ENCODE measurements at regions of chr19 and their contacts with region 1.

Region 1: DNA sequence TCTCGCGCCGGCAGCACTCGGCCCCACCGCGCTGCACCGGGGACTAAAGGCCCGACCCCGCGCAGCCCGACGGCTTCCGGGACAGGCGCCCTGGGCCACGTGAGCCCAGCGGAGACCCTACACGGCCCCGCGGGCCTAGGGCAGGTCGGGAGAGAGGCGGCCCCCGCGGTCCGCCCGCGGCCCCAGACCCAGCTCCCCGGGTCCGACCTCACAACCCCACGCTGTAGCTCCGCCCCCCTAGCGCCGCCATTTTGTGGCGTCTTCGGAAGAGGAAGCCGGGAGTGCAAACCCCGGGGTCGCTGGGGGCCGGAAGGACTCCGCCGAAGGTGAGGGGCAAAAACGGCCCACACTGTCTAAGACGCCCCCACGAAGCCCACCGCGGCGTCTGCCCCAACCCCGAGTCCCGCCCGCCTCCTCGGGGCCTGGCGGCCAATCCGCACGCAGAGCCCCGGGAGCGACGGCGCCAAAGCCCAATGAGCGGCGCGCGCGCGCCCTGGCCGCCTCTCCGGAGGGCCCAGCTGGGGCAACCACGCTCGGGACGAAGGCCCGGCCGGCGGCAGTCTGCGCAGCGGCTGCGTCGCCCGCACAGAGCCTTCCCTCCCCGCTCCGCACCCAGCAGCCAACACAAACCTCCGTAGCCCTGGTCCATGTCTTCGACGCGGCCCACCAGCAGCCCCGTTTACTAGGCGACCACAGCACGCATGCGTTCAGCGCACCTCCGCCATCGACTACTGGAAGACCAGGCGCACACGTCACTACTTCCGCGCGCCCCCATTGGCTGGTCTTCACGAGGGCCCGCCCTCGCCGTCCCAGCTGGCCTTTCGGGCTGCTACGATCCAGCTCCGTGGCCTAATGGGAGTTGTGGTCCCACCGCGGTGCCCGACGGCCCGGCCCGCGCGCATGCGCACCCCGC is at the start of gene AKAP8:
- DNase-seq: peak; percentile 97 to 98
- H3K4me3 ChIP-seq: peak within 1 kb of the TSS; percentile 78
- H3K27ac ChIP-seq: peak within 1 kb of the TSS; percentile 87
- H3K4me1 ChIP-seq: peaks cover 22% of the 10 kb centered on the region
- H3K27me3 ChIP-seq: no peaks in the 10 kb centered on the region
- CTCF ChIP-seq: no peak
- total RNA-seq, gene AKAP8: 39.5 and 43.4 TPM in 2 replicates

Region 2: DNA sequence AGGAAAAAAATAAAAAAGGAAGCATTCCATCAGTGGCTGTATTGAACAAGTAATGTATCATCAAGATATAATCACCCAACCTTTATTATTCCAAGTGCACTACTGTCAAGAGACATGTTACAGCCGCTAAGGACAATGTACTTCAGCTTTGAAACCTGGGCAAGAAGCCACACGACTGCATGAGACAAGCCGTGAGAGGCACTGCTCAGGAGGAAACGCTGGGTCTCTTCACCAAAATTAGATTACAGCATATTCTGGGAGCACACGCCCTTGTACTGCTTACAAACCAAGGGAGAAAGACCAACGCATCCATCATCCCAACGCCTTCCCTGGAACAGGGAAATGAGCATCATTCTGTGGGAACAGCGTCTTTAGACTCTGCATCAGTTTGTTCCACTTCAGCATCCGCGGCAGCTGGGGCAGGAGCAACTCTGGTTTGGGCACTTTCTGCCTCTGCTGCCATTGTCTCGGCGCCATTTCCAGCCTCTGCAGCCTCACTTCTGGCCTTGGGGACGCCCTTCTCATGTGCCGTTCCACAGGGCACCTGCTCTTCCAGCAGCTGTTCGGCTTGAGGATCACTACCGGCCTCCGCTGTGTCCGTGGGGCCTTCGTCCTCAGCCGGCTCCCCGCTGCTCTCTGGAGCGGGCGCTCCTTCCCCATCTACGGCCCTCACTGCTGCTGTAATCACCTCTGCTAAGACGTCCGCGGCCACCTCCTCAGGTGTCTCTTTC is 24.6 kb before region 1 on chr19:
- CTCF ChIA-PET with region 1: no interaction called
- POLR2A ChIA-PET with region 1: interaction called, 29 read pairs
- intact Hi-C with region 1: no loop called
- DNase-seq: no peak
- H3K4me3 ChIP-seq: no peak overlapping the region
- H3K27ac ChIP-seq: no peak overlapping the region
- H3K4me1 ChIP-seq: 0 out of 2 replicates have a peak, but pooled peaks cover 4% of the 10 kb centered on the region
- H3K27me3 ChIP-seq: no peaks in the 10 kb centered on the region
- CTCF ChIP-seq: no peak

Region 3: DNA sequence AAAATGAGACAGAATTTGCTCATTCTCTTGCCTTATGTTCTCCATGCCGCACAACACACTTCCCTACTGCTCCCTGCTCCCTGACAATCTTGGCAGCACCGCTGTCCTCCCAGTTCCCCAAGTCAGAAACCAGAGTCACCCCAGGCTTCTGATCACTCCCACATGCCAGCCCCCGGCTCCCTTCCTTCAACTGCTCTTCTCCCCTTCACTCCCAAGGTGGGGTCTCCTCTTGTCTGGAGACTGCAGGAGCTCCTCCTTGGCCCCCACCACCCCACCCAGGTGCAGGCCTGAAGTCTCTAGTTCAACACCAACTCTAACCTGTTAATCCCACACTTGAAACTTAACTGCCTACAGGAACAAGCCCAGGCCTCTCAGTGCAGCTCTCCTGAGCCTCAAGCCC is 17.1 kb after region 1 on chr19:
- CTCF ChIA-PET with region 1: no interaction called
- POLR2A ChIA-PET with region 1: no interaction called
- intact Hi-C with region 1: no loop called
- DNase-seq: no peak
- H3K4me3 ChIP-seq: no peak overlapping the region
- H3K27ac ChIP-seq: no peak overlapping the region
- H3K4me1 ChIP-seq: no peaks in the 10 kb centered on the region
- H3K27me3 ChIP-seq: no peaks in the 10 kb centered on the region
- CTCF ChIP-seq: no peak

Region 4: DNA sequence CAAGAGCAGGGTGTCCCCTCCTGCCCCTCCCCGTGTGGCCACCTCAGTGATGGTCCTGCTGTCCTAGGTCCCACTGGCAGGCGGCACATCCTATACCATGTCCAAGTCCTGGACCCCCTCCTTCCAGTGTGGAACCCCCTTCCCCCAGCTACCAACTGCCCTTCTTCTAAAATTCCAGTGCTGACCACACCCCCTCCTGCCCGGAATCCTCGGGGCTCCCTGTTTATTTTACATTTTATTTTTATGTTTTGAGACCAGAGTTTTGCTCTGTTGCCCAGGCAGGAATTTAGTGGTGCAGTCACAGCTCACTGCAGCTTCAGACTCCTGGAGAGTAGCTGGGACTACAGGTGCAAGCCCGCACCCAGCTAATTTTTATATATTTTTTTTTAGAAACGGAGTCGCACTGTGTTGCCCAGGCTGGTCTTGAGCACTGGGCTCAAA is 1648.2 kb after region 1 on chr19:
- CTCF ChIA-PET with region 1: no interaction called
- POLR2A ChIA-PET with region 1: interaction called, 12 read pairs
- intact Hi-C with region 1: no loop called
- DNase-seq: no peak
- H3K4me3 ChIP-seq: no peak overlapping the region
- H3K27ac ChIP-seq: no peak overlapping the region
- H3K4me1 ChIP-seq: peaks cover 39% of the 10 kb centered on the region
- H3K27me3 ChIP-seq: no peaks in the 10 kb centered on the region
- CTCF ChIP-seq: no peak